Right ventricle myocardium superior (tissue), 1 donor: ENCODE measurements at regions of chr20 and their contacts with region 1.

Region 1: DNA sequence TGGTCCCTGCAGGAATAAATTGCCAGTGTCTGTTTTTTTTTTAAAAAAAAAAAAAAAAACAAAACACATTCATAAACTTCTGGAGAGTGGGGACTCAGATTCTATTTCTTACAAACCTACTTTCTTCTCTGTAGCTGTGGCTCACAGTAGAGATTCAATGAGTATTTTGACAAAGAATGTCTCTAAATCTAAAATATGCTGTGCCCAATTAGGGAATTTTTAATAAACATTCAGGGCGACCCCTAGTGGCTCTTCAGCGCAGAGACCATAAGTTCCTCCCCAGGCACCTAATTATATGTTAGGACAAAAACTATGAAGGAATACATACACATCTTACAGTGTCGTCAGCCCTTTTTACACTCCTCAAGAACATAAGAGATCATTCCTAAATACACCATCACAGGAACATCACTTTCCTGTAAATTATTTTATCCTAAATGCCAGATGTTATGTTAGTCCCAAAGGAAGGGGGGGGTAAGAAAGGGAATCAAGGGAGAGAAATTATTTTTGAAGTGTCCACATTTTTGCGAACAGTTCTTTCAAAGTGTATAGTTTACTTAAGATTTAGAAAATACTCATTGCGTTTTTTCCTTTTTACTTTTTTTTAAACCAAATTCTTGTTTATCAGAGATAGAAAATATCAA is 21.8 kb upstream of the NAA20 start:
- DNase-seq: no peak
- ATAC-seq: peak; percentile 41

Region 2: GRCh38 chr20:19784511-19785172 is 210.7 kb before region 1 on chr20:
- intact Hi-C with region 1: loop called (anchors 5 kb)
- DNase-seq: peak; percentile 58
- ATAC-seq: peak; percentile 79

Region 3: DNA sequence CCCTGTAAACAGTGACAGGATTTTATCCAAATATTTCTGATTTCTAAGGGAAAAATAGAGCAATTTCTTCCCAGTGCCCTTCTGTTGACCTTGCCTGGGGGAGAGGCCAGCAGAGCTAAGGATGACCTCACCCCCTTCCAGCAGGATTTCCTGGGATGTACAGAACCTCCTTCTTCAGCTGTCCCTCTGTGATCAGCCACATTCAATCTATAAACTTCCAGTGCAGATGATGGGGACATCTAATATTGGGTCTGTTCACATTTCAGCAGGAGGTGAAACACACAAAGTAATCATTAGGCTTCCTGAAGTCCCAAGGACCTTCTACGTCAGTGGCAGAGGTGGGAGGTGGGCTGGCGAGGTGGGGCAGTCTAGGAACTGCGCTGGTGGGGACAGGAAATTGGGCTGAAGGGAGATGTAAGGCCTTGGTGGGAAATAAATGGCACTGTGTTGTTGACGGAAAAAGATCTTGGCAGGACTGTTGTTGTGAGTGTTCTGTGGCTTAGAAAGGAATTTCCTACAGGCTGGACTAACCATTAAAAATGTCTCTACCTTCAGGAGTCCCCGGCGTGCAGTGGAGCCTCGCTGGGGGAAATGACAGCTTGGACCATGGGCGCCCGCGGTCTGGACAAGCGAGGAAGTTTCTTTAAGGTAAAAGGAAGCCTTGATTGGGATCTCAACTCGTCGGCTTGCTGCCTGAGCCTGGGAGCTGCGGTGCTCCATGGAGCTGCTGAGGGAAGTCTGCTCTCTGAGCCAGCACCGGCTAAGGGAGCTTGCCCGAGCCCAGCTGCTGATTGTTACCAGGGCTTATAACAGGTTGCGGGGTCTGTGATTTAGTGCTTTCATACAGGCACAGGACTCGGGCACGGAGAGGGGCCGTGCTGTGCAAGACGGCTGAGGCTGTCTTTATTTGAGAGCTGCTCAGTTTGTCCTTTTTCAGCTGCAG is 106.1 kb before region 1 on chr20:
- intact Hi-C with region 1: loop called (anchors 10 kb)
- DNase-seq: peak; percentile 76
- ATAC-seq: peak; percentile 60